ENCODE measurements at regions of chr3 and their contacts with region 1.

Region 1: GRCh38 chr3:123499322-123499721 is 50.4 kb upstream of the ADCY5 start:
- DNase-seq: no peak
- H3K4me3 ChIP-seq: no peak overlapping the region
- H3K27ac ChIP-seq: no peak overlapping the region
- H3K27me3 ChIP-seq: no peaks in the 10 kb centered on the region
- CTCF ChIP-seq: no peak

Region 2: GRCh38 chr3:123025642-123026521 is 473.4 kb before region 1 on chr3:
- intact Hi-C with region 1: no loop called
- DNase-seq: peak in 4 of 10 donors; percentile 4 to 50 (median 44)
- H3K4me3 ChIP-seq: peak overlapping the region in 58 of 59 donors; percentile 48 to 80 (median 69)
- H3K27ac ChIP-seq: peak overlapping the region in 3 of 59 donors; percentile 18 to 75 (median 24)
- H3K27me3 ChIP-seq: peaks cover 0 to 10% (median 0%) of the 10 kb centered on the region in 45 donors
- CTCF ChIP-seq: no peak

Region 3: DNA sequence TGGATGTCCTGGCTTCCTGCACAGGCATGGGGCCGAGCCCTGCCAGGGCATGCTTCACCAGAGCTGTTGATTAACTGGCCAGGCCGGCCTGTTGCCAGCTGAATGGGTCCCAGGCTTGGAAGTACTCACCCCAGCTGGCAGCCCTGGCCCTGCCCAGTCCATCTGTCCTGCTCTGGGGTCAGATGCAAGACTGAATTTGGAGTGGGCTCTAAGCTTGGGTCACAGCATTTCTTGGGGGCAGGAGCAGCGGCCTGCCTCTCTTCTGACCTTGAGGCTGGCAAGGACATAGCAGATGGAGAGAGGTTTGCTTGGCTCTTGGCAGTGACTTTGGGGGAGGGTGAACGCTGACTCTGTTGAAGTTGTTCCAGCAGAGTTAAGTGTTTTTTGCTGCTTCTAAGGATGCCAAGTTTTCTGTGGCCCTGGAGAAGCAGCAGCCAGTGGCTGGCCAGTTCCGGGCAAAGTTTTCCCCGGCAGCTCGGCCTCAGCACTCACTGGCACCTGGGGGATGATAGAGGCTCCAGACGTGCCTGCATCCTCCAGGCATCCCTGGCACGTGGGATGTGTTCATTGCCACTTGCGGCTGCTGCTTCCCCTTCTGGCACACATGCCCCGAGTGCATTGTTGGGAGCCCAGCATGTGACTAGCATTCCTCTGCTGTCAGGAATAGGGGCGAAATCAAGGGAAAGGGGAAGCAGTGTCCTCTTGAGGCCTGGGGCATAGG is 409.6 kb before region 1 on chr3:
- intact Hi-C with region 1: no loop called
- DNase-seq: peak; percentile 52 to 91 (median 78)
- H3K4me3 ChIP-seq: no peak overlapping the region
- H3K27ac ChIP-seq: peak overlapping the region in 8 of 59 donors; percentile 14 to 39 (median 20)
- H3K27me3 ChIP-seq: no peaks in the 10 kb centered on the region
- CTCF ChIP-seq: no peak

Region 4: DNA sequence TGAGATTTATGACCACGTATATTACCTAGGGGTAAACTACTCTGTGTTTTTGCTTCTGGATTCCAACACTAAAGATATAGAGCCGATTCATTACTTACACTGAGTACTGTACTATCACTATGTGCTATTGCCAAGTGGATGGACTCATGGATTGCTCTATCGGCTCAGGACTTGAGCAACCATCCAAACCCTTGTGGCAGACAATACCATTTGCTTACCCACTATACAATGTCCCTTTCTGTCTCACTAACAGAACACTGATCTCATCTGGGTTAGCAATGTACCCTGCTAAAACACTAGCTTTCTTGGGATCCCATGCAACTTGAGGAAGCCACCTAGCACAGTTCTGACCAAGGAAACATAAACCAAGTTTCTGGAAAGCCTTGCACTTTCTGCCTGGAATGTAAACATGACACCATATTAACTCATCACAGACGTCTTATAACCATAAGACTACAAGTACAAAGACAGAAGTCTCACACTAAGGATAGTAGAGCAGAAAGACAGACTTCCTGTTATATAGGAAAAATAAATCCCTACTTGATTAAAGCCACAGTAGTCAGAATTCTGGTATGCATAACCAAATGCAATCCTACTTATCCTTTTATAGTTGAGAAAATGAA is 46.9 kb after region 1 on chr3:
- intact Hi-C with region 1: loop called (anchors 5 to 10 kb)
- DNase-seq: no peak
- H3K4me3 ChIP-seq: no peak overlapping the region
- H3K27ac ChIP-seq: peak overlapping the region in 12 of 59 donors; percentile 1 to 77 (median 28)
- H3K27me3 ChIP-seq: no peaks in the 10 kb centered on the region
- CTCF ChIP-seq: no peak

Measured in dorsolateral prefrontal cortex (tissue), 120 donors.